CD8-positive, alpha-beta T cell (primary cell): ENCODE measurements at regions of chr2 and their contacts with region 1.

Region 1: DNA sequence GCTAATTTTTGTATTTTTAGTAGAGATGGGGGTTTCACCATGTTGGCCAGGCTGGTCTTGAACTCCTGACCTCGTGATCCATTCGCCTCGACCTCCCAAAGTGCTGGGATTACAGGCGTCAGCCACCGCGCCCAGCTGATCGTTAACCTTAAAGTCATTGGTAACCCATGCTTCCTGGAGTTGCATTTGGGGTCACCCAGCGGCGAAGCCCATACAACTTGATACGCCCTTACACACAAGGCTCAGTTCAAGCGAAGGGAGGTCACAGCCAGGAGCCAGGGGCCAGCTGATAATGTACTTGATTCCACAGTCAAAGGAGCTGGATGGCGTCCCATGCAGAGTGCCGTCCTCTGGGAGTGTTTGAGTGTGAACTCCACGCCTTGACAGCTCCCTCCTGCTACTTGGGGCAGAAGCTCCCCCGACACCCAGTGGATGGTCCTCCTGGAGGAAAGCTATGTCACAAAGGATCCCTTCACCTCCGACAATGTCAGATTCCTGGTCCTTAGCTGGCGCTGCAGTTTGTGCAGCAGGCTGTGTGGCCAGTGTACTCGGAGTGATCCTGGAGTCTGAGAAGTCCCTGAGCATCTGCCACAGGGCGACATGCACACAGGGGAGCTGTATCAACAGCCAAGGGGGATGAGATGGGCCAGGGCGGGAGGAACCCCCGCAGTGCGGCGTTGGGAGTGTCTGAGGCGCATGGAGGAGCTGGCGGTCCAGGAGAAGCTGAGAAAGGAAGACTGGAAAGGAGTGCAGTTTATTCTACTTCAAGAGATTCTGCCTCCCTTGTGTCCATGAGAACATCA is 7.9 kb downstream of the CLHC1 start:
- DNase-seq: peak in 3 of 9 experiments; percentile 5 to 52 (median 34)
- ATAC-seq: no peak
- H3K4me3 ChIP-seq: peak overlapping the region in 1 of 2 experiments; percentile 53
- H3K4me3 Mint-ChIP-seq: peak overlapping the region; percentile 84
- H3K27ac ChIP-seq: peak overlapping the region; percentile 68 to 72
- H3K27ac Mint-ChIP-seq: peak overlapping the region; percentile 91
- H3K4me1 ChIP-seq: peaks cover 28% of the 10 kb centered on the region
- H3K4me1 Mint-ChIP-seq: peaks cover 42% of the 10 kb centered on the region
- H3K27me3 ChIP-seq: no peaks in the 10 kb centered on the region
- H3K27me3 Mint-ChIP-seq: no peaks in the 10 kb centered on the region
- CTCF ChIP-seq: no peak

Region 2: DNA sequence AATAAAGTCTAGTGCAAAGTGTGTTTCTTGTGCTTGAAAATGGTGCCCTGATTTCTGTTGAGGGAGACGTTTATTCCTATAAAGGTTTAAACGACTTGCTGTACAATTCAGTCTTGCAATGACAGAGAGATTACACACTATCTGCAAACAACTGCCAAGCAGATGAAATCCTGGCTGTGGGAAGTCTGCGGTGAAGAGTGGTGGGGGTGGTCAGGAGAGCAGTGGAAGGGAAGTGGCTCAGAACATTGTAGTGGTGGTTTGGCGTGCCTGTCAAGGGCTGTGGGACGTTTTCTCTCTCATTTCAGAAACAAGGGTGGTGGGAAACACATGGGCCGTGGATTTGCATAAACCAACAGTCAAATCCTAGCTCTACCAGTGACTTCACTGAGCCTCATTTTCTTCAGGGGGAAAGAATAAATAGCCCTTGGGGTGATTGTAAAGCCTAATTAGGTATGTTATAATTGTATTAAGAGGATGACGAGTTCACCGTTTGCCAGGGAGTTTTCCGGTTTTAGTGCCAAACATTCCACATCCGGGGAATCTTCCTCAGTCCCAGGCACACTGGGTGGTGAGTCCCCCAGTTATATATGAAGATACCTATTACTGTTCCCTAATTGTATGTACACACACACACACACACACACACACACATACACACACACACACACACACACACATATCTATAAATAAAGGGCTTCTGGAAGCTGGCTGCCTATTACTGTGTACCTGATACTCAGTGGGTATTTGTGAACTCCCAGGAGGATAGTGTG is 653.0 kb before region 1 on chr2:
- CTCF ChIA-PET with region 1: no interaction called
- POLR2A ChIA-PET with region 1: no interaction called
- intact Hi-C with region 1: loop called in 1 of 2 experiments (anchors 10 kb)
- DNase-seq: peak; percentile 23 to 87 (median 69)
- ATAC-seq: peak; percentile 8
- H3K4me3 ChIP-seq: peak overlapping the region; percentile 13 to 21
- H3K4me3 Mint-ChIP-seq: peak overlapping the region; percentile 81
- H3K27ac ChIP-seq: peak overlapping the region; percentile 87 to 94
- H3K27ac Mint-ChIP-seq: peak overlapping the region; percentile 100
- H3K4me1 ChIP-seq: peaks cover 94% of the 10 kb centered on the region
- H3K4me1 Mint-ChIP-seq: peaks cover 95% of the 10 kb centered on the region
- H3K27me3 ChIP-seq: no peaks in the 10 kb centered on the region
- H3K27me3 Mint-ChIP-seq: no peaks in the 10 kb centered on the region
- CTCF ChIP-seq: no peak

Region 3: GRCh38 chr2:55010149-55010591 is 214.0 kb before region 1 on chr2:
- CTCF ChIA-PET with region 1: interaction called, 4 read pairs
- POLR2A ChIA-PET with region 1: interaction called, 3 read pairs
- intact Hi-C with region 1: loop called in 1 of 2 experiments (anchors 5 kb)
- DNase-seq: peak; percentile 7 to 79 (median 54)
- ATAC-seq: peak; percentile 95
- H3K4me3 ChIP-seq: peak overlapping the region; percentile 24 to 43
- H3K4me3 Mint-ChIP-seq: peak overlapping the region; percentile 93
- H3K27ac ChIP-seq: peak overlapping the region; percentile 40 to 45
- H3K27ac Mint-ChIP-seq: peak overlapping the region; percentile 95
- H3K4me1 ChIP-seq: peaks cover 61% of the 10 kb centered on the region
- H3K4me1 Mint-ChIP-seq: peaks cover 77% of the 10 kb centered on the region
- H3K27me3 ChIP-seq: no peaks in the 10 kb centered on the region
- H3K27me3 Mint-ChIP-seq: no peaks in the 10 kb centered on the region
- CTCF ChIP-seq: no peak

Region 4: DNA sequence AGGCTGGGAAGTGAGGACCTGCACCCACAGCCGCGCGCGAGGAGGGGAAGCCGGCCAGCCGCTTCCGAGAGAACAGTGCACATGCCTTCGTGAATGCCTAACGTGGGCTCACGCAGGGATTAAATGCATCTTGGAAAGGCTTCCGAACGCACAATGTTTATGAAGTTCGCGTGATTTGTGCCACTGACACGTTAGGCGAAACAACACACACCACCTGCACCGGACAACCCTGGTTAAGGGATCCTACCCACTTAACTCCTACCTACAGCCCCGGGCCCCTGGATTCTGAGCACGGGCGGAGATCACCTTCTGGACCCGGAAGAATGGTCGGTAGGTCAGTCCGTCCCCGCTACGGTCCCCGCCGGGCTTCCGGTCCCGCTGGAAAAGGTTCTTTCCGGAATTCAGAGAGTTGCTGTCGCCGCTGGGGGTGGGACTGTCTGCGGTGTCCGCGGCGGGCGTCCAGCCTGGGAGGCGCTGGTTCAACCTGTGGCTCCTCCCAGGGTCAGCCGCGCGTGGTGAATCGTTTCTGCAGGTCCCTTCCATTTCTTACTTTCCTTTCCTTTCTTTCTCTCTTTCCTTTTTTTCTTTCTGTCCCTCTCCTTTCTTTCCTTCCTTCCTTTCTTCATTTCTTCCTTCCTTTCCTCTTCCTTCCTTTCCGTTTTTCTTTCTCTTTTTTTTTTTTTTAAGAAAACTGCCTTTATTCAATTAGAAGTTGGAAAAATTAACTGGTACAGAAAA is 44.9 kb after region 1 on chr2 and contains the start of gene MTIF2:
- CTCF ChIA-PET with region 1: no interaction called
- POLR2A ChIA-PET with region 1: no interaction called
- intact Hi-C with region 1: loop called in 1 of 2 experiments (anchors 1 kb)
- DNase-seq: peak; percentile 75 to 93 (median 88)
- ATAC-seq: peak; percentile 83
- H3K4me3 ChIP-seq: peak within 1 kb of the TSS; percentile 61 to 67
- H3K4me3 Mint-ChIP-seq: peak within 1 kb of the TSS; percentile 95
- H3K27ac ChIP-seq: peak within 1 kb of the TSS; percentile 59 to 66
- H3K27ac Mint-ChIP-seq: peak within 1 kb of the TSS; percentile 96
- H3K4me1 ChIP-seq: peaks cover 4% of the 10 kb centered on the region
- H3K4me1 Mint-ChIP-seq: peaks cover 26% of the 10 kb centered on the region
- H3K27me3 ChIP-seq: peaks cover 0 to 2% of the 10 kb centered on the region in 2 experiments
- H3K27me3 Mint-ChIP-seq: no peaks in the 10 kb centered on the region
- CTCF ChIP-seq: no peak
- total RNA-seq, gene MTIF2: 12.2 to 14.4 TPM